ENCODE measurements at regions of chr1 and their contacts with region 1.

Region 1: DNA sequence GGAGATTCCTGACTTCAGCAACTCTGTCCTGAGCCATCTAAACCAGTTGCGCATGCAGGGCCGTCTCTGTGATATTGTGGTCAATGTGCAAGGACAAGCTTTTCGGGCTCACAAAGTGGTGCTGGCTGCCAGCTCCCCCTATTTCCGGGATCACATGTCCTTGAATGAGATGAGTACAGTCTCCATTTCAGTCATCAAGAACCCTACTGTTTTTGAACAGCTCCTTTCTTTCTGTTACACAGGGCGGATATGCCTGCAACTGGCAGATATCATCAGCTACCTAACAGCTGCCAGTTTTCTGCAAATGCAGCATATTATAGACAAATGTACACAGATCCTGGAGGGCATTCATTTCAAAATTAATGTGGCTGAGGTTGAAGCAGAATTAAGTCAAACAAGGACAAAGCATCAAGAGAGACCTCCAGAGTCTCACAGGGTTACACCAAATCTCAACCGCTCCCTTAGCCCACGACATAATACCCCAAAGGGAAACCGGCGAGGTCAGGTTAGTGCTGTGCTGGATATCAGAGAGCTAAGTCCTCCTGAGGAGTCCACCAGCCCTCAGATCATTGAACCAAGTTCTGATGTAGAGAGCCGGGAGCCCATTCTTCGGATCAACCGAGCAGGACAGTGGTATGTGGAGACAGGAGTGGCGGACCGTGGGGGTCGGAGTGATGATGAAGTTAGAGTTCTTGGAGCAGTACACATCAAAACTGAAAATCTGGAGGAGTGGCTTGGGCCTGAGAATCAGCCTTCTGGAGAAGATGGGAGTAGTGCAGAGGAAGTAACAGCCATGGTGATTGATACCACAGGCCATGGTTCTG is 2.3 kb downstream of the ZBTB37 start:
- DNase-seq: no peak

Region 2: DNA sequence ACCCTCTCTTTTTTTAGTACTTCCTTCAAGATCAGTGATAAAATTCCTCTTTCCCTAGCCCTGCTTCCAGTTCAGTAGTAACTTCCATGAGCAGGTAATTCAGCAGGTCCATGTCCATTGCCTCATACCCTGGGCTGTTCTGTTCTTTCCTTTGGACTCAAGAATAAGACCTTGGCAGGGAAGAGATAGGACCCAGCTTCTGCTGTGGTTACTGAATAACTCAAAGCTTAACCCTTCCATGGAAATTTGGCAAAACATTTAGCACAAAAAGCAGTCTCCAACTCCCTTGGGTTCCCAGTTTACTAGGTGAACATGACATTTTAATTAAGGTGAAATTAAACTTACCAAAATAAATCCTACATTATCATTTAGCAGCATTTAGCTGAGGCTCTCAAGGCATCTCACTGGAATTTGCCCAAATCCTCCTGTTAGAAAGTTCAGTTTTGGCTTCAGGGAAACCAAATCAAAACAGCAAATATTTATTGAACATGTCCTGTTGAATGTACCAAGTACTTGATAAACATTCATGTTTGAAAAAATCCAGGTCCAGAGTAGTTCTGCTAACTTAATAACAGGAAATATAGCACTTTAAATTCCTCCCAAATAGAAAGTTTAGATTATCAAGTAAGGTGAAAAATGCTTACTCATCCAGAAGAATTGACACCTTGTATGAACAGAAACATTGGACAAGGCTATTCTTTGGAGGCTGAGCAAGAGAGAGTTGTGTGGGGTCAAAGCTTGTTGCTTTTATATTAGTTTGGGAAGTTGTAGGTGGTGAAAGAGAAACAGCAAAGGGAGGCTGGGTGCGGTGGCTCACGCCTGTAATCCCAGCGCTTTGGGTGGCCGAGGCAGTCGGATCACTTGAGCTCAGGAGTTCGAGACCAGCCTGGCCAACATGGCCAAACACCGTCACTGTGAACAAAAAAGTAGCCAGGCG is 55.1 kb after region 1 on chr1:
- in situ Hi-C with region 1: loop called (anchors 10 kb)
- DNase-seq: no peak

Measured in G401 (cell line).